ENCODE measurements at regions of chr5 and their contacts with region 1.

Region 1: GRCh38 chr5:145681686-145682085 is 153.5 kb downstream of the PRELID2 start:
- DNase-seq: peak; percentile 81
- ATAC-seq: peak; percentile 80
- H3K4me3 ChIP-seq: no peak overlapping the region
- H3K27ac ChIP-seq: no peak overlapping the region
- H3K4me1 ChIP-seq: no peaks in the 10 kb centered on the region
- H3K27me3 ChIP-seq: no peaks in the 10 kb centered on the region
- CTCF ChIP-seq: peak; percentile 82

Region 2: GRCh38 chr5:145574889-145575573 is 106.7 kb before region 1 on chr5:
- CTCF ChIA-PET with region 1: no interaction called
- POLR2A ChIA-PET with region 1: no interaction called
- intact Hi-C with region 1: loop called (anchors 1 kb)
- DNase-seq: no peak
- ATAC-seq: no peak
- H3K4me3 ChIP-seq: no peak overlapping the region
- H3K27ac ChIP-seq: no peak overlapping the region
- H3K4me1 ChIP-seq: peaks cover 6% of the 10 kb centered on the region; the same call in 1 of the 2 replicates
- H3K27me3 ChIP-seq: no peaks in the 10 kb centered on the region
- CTCF ChIP-seq: no peak

Region 3: GRCh38 chr5:145825751-145826180 is 144.1 kb after region 1 on chr5:
- CTCF ChIA-PET with region 1: no interaction called
- POLR2A ChIA-PET with region 1: no interaction called
- intact Hi-C with region 1: loop called (anchors 1 kb)
- DNase-seq: peak; percentile 66
- ATAC-seq: peak; percentile 58
- H3K4me3 ChIP-seq: no peak overlapping the region
- H3K27ac ChIP-seq: no peak overlapping the region
- H3K4me1 ChIP-seq: peaks cover 14% of the 10 kb centered on the region; the same call in 1 of the 2 replicates
- H3K27me3 ChIP-seq: no peaks in the 10 kb centered on the region
- CTCF ChIP-seq: peak; percentile 91

Region 4: GRCh38 chr5:145887976-145888574 is 206.4 kb after region 1 on chr5:
- CTCF ChIA-PET with region 1: no interaction called
- POLR2A ChIA-PET with region 1: no interaction called
- intact Hi-C with region 1: loop called (anchors 10 kb)
- DNase-seq: peak; percentile 68
- ATAC-seq: peak; percentile 99
- H3K4me3 ChIP-seq: no peak overlapping the region
- H3K27ac ChIP-seq: no peak overlapping the region
- H3K4me1 ChIP-seq: no peaks in the 10 kb centered on the region
- H3K27me3 ChIP-seq: no peaks in the 10 kb centered on the region
- CTCF ChIP-seq: peak; percentile 75